CD8-positive, alpha-beta memory T cell (primary cell): ENCODE measurements at regions of chr9 and their contacts with region 1.

Region 1: DNA sequence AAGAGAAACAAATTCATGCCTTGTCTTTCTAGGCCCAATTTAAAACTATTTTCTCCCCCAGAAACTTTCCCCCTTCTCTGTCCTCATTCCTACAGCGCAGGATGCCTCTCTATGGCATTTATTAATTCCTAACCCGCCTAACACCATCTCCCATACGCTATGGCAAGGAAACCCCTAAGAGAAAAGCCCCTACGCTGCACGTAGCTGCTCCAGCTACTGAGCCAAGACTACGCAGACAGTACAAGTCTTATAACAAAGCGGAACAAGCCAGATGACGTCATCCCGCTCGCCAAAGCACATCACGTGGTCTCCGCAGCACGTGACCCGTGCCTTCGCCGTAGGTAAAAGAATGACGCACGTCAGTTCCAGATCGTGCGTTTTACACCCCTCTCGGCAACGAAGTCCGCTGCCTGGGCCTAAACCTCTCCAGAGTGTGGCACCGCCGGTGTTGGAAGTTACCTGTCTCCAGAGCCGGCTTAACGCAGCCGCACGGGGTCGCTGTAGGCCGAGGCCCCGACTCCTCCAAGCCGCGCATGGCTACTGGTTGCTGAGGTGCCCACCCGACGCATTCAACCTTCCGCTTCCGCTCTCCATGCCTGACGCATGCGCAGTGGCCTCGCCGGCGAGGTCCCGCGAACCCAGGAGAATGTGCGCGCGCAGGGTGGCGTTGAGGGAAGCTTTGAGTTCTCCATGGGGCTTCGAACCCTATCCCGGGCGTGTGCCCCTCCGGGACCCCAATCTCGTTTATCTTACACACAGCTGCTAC is at the start of gene TRMO:
- DNase-seq: peak; percentile 97 to 99 (median 98)
- H3K4me3 ChIP-seq: peak within 1 kb of the TSS; percentile 92
- H3K4me3 Mint-ChIP-seq: peak within 1 kb of the TSS; percentile 87 to 96 (median 90)
- H3K27ac ChIP-seq: peak within 1 kb of the TSS; percentile 100
- H3K27ac Mint-ChIP-seq: peak within 1 kb of the TSS; percentile 98 to 100 (median 99)
- H3K4me1 ChIP-seq: peaks cover 47% of the 10 kb centered on the region
- H3K4me1 Mint-ChIP-seq: peaks cover 48 to 59% (median 49%) of the 10 kb centered on the region in 3 donors
- H3K27me3 ChIP-seq: no peaks in the 10 kb centered on the region
- H3K27me3 Mint-ChIP-seq: peaks cover 0 to 9% of the 10 kb centered on the region in 2 donors
- total RNA-seq, gene TRMO: 19.1 to 19.2 TPM

Region 2: GRCh38 chr9:97696803-97697601 is 225.1 kb before region 1 on chr9 and contains the start of gene XPA:
- CTCF ChIA-PET with region 1: no interaction called
- POLR2A ChIA-PET with region 1: interaction called, 17 read pairs
- DNase-seq: peak; percentile 97 to 98 (median 97)
- H3K4me3 ChIP-seq: peak within 1 kb of the TSS; percentile 78
- H3K4me3 Mint-ChIP-seq: peak within 1 kb of the TSS; percentile 87 to 96 (median 92)
- H3K27ac ChIP-seq: peak within 1 kb of the TSS; percentile 69
- H3K27ac Mint-ChIP-seq: peak within 1 kb of the TSS; percentile 93 to 99 (median 97)
- H3K4me1 ChIP-seq: peaks cover 38% of the 10 kb centered on the region
- H3K4me1 Mint-ChIP-seq: peaks cover 53 to 58% (median 53%) of the 10 kb centered on the region in 3 donors
- H3K27me3 ChIP-seq: no peaks in the 10 kb centered on the region
- H3K27me3 Mint-ChIP-seq: peaks cover 0 to 10% of the 10 kb centered on the region in 2 donors
- total RNA-seq, gene XPA: 11.2 to 13.0 TPM

Region 3: DNA sequence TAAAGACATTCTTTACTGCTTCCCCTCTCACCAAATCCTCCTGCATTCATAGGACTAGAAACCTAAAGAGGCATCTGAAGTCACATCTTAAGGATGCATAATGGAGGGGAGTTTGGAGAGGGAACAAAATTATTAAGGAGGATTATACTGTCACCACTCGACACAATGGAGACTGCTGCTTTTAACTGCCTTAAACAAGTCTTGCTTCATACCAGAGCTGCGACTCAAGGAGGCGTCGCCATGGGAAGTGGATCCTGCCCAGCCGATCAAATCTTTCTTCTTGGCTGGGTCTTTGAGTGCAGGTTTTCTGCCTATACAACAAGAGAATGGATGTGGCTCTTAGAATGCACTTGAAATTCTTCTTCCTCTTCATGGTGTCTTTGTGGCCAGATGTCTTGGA is 135.8 kb before region 1 on chr9:
- CTCF ChIA-PET with region 1: no interaction called
- POLR2A ChIA-PET with region 1: no interaction called
- DNase-seq: no peak
- H3K4me3 ChIP-seq: no peak overlapping the region
- H3K4me3 Mint-ChIP-seq: no peak overlapping the region
- H3K27ac ChIP-seq: no peak overlapping the region
- H3K27ac Mint-ChIP-seq: no peak overlapping the region
- H3K4me1 ChIP-seq: no peaks in the 10 kb centered on the region
- H3K4me1 Mint-ChIP-seq: no peaks in the 10 kb centered on the region
- H3K27me3 ChIP-seq: no peaks in the 10 kb centered on the region
- H3K27me3 Mint-ChIP-seq: peaks cover 4 to 35% of the 10 kb centered on the region in 2 donors

Region 4: GRCh38 chr9:97906236-97906831 is 15.8 kb before region 1 on chr9:
- CTCF ChIA-PET with region 1: interaction called, 109 read pairs
- POLR2A ChIA-PET with region 1: interaction called, 55 read pairs
- DNase-seq: peak; percentile 32 to 72 (median 61)
- H3K4me3 ChIP-seq: peak overlapping the region; percentile 47
- H3K4me3 Mint-ChIP-seq: peak overlapping the region; percentile 82 to 91 (median 86)
- H3K27ac ChIP-seq: peak overlapping the region; percentile 55
- H3K27ac Mint-ChIP-seq: peak overlapping the region; percentile 93 to 99 (median 98)
- H3K4me1 ChIP-seq: peaks cover 92% of the 10 kb centered on the region
- H3K4me1 Mint-ChIP-seq: peaks cover 80 to 92% (median 91%) of the 10 kb centered on the region in 3 donors
- H3K27me3 ChIP-seq: no peaks in the 10 kb centered on the region
- H3K27me3 Mint-ChIP-seq: no peaks in the 10 kb centered on the region

Region 5: GRCh38 chr9:97954550-97954989 is 32.4 kb after region 1 on chr9:
- CTCF ChIA-PET with region 1: interaction called, 63 read pairs
- POLR2A ChIA-PET with region 1: interaction called, 3 read pairs
- DNase-seq: peak; percentile 16 to 70 (median 53)
- H3K4me3 ChIP-seq: no peak overlapping the region
- H3K4me3 Mint-ChIP-seq: no peak overlapping the region
- H3K27ac ChIP-seq: no peak overlapping the region
- H3K27ac Mint-ChIP-seq: peak overlapping the region in 1 of 8 donors; percentile 11
- H3K4me1 ChIP-seq: no peaks in the 10 kb centered on the region
- H3K4me1 Mint-ChIP-seq: peaks cover 0 to 4% (median 0%) of the 10 kb centered on the region in 3 donors
- H3K27me3 ChIP-seq: no peaks in the 10 kb centered on the region
- H3K27me3 Mint-ChIP-seq: peaks cover 4% of the 10 kb centered on the region in 2 donors

Region 6: GRCh38 chr9:97970165-97970564 is 48.0 kb after region 1 on chr9:
- CTCF ChIA-PET with region 1: no interaction called
- POLR2A ChIA-PET with region 1: no interaction called
- DNase-seq: peak in 1 of 5 donors; percentile 30
- H3K4me3 ChIP-seq: no peak overlapping the region
- H3K4me3 Mint-ChIP-seq: no peak overlapping the region
- H3K27ac ChIP-seq: no peak overlapping the region
- H3K27ac Mint-ChIP-seq: no peak overlapping the region
- H3K4me1 ChIP-seq: no peaks in the 10 kb centered on the region
- H3K4me1 Mint-ChIP-seq: no peaks in the 10 kb centered on the region
- H3K27me3 ChIP-seq: no peaks in the 10 kb centered on the region
- H3K27me3 Mint-ChIP-seq: peaks cover 17 to 26% of the 10 kb centered on the region in 2 donors

Region 7: GRCh38 chr9:98045234-98046179 is 123.4 kb after region 1 on chr9:
- CTCF ChIA-PET with region 1: interaction called, 17 read pairs
- POLR2A ChIA-PET with region 1: no interaction called
- DNase-seq: peak in 4 of 5 donors; percentile 35 to 75 (median 61)
- H3K4me3 ChIP-seq: peak overlapping the region; percentile 47
- H3K4me3 Mint-ChIP-seq: peak overlapping the region; percentile 66 to 86 (median 81)
- H3K27ac ChIP-seq: peak overlapping the region; percentile 55
- H3K27ac Mint-ChIP-seq: peak overlapping the region; percentile 49 to 97 (median 90)
- H3K4me1 ChIP-seq: peaks cover 16% of the 10 kb centered on the region
- H3K4me1 Mint-ChIP-seq: peaks cover 22 to 40% (median 35%) of the 10 kb centered on the region in 3 donors
- H3K27me3 ChIP-seq: no peaks in the 10 kb centered on the region
- H3K27me3 Mint-ChIP-seq: no peaks in the 10 kb centered on the region

Region 8: GRCh38 chr9:98064623-98065392 is 142.7 kb after region 1 on chr9:
- CTCF ChIA-PET with region 1: no interaction called
- POLR2A ChIA-PET with region 1: no interaction called
- DNase-seq: no peak
- H3K4me3 ChIP-seq: no peak overlapping the region
- H3K4me3 Mint-ChIP-seq: no peak overlapping the region
- H3K27ac ChIP-seq: no peak overlapping the region
- H3K27ac Mint-ChIP-seq: peak overlapping the region in 1 of 8 donors; percentile 52
- H3K4me1 ChIP-seq: no peaks in the 10 kb centered on the region
- H3K4me1 Mint-ChIP-seq: peaks cover under 1 to 10% (median 9%) of the 10 kb centered on the region in 3 donors
- H3K27me3 ChIP-seq: no peaks in the 10 kb centered on the region
- H3K27me3 Mint-ChIP-seq: no peaks in the 10 kb centered on the region

Region 9: GRCh38 chr9:98263482-98264357 is 341.6 kb after region 1 on chr9:
- CTCF ChIA-PET with region 1: interaction called, 5 read pairs
- POLR2A ChIA-PET with region 1: interaction called, 10 read pairs
- DNase-seq: peak; percentile 69 to 88 (median 71)
- H3K4me3 ChIP-seq: no peak overlapping the region
- H3K4me3 Mint-ChIP-seq: peak overlapping the region in 1 of 7 donors; percentile 5
- H3K27ac ChIP-seq: no peak overlapping the region
- H3K27ac Mint-ChIP-seq: peak overlapping the region in 1 of 8 donors; percentile 70
- H3K4me1 ChIP-seq: no peaks in the 10 kb centered on the region
- H3K4me1 Mint-ChIP-seq: peaks cover 0 to 2% (median 0%) of the 10 kb centered on the region in 3 donors
- H3K27me3 ChIP-seq: no peaks in the 10 kb centered on the region
- H3K27me3 Mint-ChIP-seq: peaks cover 2 to 14% of the 10 kb centered on the region in 2 donors